Esophagus squamous epithelium (tissue), 5 donors: ENCODE measurements at regions of chr5 and their contacts with region 1.

Region 1: GRCh38 chr5:82174128-82174918 is 103.8 kb downstream of the RPS23 start:
- DNase-seq: no peak
- H3K4me3 ChIP-seq: no peak overlapping the region
- H3K27ac ChIP-seq: no peak overlapping the region
- H3K4me1 ChIP-seq: no peaks in the 10 kb centered on the region
- H3K27me3 ChIP-seq: no peaks in the 10 kb centered on the region
- CTCF ChIP-seq: peak in 5 of 6 experiments; percentile 47 to 76 (median 62)
- POLR2A ChIP-seq: no peak

Region 2: GRCh38 chr5:81971712-81972495 is 202.4 kb before region 1 on chr5 and contains the start of gene ATG10:
- intact Hi-C with region 1: no loop called
- DNase-seq: peak; percentile 50
- H3K4me3 ChIP-seq: peak within 1 kb of the TSS; percentile 68 to 94 (median 78)
- H3K27ac ChIP-seq: peak within 1 kb of the TSS; percentile 92 to 100 (median 98)
- H3K4me1 ChIP-seq: peaks cover 0 to 33% (median 6%) of the 10 kb centered on the region in 3 donors
- H3K27me3 ChIP-seq: no peaks in the 10 kb centered on the region
- CTCF ChIP-seq: no peak
- POLR2A ChIP-seq: peak in 3 of 4 donors; percentile 91 to 98 (median 94)
- total RNA-seq, gene ATG10: 3.1 to 7.8 (median 6.1) TPM

Region 3: DNA sequence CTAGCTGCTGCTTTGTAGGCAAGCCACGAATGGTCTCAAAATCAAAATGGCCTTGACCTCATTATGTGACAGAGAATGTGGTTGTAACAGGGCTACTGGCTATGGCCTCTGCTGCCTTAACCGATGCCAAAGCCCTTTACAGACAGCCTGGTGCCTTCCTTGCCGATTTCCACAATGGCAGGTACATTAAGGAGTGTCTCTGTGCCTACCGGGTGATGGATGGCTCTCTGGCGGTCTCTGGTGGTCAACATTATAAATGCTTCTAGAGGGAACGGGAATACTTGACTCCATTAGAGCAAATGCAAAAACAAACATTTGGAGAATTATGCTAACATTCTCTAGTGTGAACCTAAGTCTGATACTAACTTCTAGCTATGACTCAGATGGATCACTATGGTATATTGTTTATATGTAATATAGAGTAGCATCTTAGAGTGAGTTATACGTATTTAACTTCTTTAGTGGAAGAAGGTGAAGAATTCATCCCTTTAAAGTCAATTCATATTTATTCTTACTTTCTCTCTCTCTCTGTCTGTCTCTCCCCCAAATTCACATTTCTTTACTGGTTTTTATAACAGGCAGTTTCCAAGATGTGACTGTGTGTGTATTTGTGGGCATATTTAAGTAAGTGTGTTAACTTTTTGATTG is 51.3 kb after region 1 on chr5:
- intact Hi-C with region 1: loop called (anchors 10 kb)
- DNase-seq: no peak
- H3K4me3 ChIP-seq: no peak overlapping the region
- H3K27ac ChIP-seq: no peak overlapping the region
- H3K4me1 ChIP-seq: peaks cover 0 to 4% (median 0%) of the 10 kb centered on the region in 3 donors
- H3K27me3 ChIP-seq: no peaks in the 10 kb centered on the region
- CTCF ChIP-seq: peak; percentile 67 to 88 (median 82)
- POLR2A ChIP-seq: no peak